ENCODE measurements at regions of chr2 and their contacts with region 1.

Region 1: DNA sequence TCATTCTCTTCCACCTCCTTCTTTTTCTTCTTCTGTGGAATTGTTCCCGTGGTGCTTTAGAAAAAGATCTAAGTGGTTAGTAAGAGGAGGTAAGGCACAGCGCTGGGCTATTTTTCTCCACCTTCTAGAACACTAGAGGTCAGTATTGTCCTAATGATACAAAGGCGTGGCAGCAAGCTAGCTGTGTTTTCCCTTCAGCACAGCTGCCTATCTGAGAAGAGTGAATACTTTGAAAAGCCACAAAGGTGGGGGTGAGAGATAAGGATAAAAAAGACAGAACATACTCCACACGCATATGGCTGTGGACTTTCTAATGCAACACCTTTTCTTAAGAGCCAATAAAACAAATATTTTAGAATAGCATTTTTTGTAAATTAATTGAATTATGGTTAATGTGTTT is 2.1 kb downstream of the CNTNAP5 start:
- DNase-seq: peak; percentile 41 to 59
- H3K4me3 ChIP-seq: no peak overlapping the region
- H3K4me3 Mint-ChIP-seq: no peak overlapping the region
- H3K27ac Mint-ChIP-seq: no peak overlapping the region
- H3K4me1 ChIP-seq: no peaks in the 10 kb centered on the region
- H3K4me1 Mint-ChIP-seq: no peaks in the 10 kb centered on the region
- H3K27me3 ChIP-seq: no peaks in the 10 kb centered on the region
- H3K27me3 Mint-ChIP-seq: peaks cover 3% of the 10 kb centered on the region
- CTCF ChIP-seq: peak; percentile 58 to 67

Region 2: DNA sequence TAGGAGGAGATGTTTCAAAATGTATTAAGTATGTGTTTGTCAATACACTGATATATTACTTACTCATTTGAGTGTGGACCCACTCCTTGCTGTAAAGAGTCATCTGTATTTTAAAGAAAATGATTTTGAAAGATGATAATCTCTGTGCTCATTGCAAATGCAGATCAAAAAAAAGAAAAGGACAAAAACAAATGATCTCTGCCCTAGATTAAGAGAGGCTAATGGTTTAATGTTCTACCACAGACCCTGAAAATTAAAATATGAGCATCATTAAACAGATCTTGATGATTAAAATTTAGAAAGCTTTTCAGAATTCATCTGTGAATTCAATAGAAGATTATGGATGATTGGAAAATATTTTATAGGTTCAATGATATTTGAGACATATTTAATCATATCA is 134.4 kb after region 1 on chr2:
- CTCF ChIA-PET with region 1: interaction called, 4 read pairs
- POLR2A ChIA-PET with region 1: no interaction called
- intact Hi-C with region 1: loop called (anchors 1 kb)
- DNase-seq: no peak
- H3K4me3 ChIP-seq: no peak overlapping the region
- H3K4me3 Mint-ChIP-seq: no peak overlapping the region
- H3K27ac Mint-ChIP-seq: no peak overlapping the region
- H3K4me1 ChIP-seq: no peaks in the 10 kb centered on the region
- H3K4me1 Mint-ChIP-seq: no peaks in the 10 kb centered on the region
- H3K27me3 ChIP-seq: no peaks in the 10 kb centered on the region
- H3K27me3 Mint-ChIP-seq: peaks cover 6% of the 10 kb centered on the region
- CTCF ChIP-seq: no peak

Region 3: DNA sequence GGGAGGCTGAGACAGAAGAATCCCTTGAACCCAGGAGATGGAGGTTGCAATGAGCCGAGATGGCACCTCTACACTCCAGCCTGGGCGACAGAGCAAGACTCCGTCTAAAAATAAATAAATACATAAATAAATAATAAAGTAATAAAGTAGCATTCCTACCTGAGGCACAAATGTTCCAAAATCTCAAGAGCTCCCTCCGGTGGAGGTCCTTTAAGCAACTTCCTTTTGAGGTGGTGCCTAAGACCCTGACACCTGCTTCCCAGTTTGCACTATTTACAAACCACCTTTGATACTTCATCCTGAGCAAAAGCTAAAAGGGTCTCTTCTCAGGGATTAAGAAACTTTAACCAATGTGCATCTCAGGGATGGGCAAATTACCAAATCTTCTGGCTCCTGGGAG is 503.0 kb after region 1 on chr2:
- CTCF ChIA-PET with region 1: no interaction called
- POLR2A ChIA-PET with region 1: no interaction called
- intact Hi-C with region 1: loop called (anchors 10 kb)
- DNase-seq: no peak
- H3K4me3 ChIP-seq: no peak overlapping the region
- H3K4me3 Mint-ChIP-seq: no peak overlapping the region
- H3K27ac Mint-ChIP-seq: no peak overlapping the region
- H3K4me1 ChIP-seq: no peaks in the 10 kb centered on the region
- H3K4me1 Mint-ChIP-seq: no peaks in the 10 kb centered on the region
- H3K27me3 ChIP-seq: no peaks in the 10 kb centered on the region; the same call in none of the 2 replicates
- H3K27me3 Mint-ChIP-seq: peaks cover 9% of the 10 kb centered on the region
- CTCF ChIP-seq: no peak

Region 4: DNA sequence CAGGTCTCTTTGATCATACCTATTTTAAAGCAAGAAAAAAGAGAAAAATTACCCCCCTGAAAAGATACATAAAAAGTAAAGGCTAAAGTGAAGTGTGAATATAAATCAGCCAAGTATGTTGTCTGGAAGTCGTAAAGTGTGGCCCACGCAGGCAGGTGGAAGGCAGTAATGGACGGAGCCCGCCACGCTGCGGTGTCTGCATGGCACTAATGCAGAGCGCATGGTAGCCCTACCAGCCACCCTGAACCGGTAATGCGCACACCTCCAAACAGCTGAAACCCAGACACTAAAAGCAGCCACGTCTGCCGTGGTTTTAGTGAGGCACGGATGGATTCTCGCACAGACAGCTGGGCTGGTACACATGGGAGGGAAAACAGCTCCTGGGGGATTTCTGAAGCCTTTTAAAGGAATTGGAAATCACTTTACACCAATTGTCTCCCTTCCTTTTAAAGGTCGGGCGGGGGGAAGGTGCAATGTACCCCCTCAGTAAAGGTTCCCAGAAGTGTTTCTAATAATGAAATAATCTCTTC is 613.1 kb after region 1 on chr2:
- CTCF ChIA-PET with region 1: no interaction called
- POLR2A ChIA-PET with region 1: no interaction called
- intact Hi-C with region 1: no loop called
- DNase-seq: no peak
- H3K4me3 ChIP-seq: no peak overlapping the region
- H3K4me3 Mint-ChIP-seq: no peak overlapping the region
- H3K27ac Mint-ChIP-seq: no peak overlapping the region
- H3K4me1 ChIP-seq: no peaks in the 10 kb centered on the region
- H3K4me1 Mint-ChIP-seq: no peaks in the 10 kb centered on the region
- H3K27me3 ChIP-seq: no peaks in the 10 kb centered on the region
- H3K27me3 Mint-ChIP-seq: no peaks in the 10 kb centered on the region
- CTCF ChIP-seq: no peak

Region 5: DNA sequence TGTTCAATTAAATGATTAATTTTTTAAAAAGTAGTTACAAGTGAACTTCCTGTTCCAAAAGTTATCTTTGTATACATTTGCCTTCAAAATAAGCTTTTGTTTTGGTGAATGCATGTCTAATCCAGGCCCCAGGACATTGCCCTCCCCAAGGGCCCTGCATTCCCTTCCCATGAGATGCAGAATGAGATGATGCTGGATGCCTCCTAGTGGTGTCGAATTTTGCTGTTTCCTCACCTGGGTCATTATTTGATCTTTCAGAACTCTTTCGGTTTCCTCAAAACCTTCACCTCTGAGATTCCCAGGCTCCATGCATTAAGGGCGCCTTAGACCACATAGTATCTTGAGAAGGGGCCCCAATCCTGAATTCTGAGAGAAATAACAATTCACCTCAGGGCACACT is 726.7 kb after region 1 on chr2:
- CTCF ChIA-PET with region 1: no interaction called
- POLR2A ChIA-PET with region 1: no interaction called
- intact Hi-C with region 1: loop called (anchors 1 kb)
- DNase-seq: no peak
- H3K4me3 ChIP-seq: no peak overlapping the region
- H3K4me3 Mint-ChIP-seq: no peak overlapping the region
- H3K27ac Mint-ChIP-seq: no peak overlapping the region
- H3K4me1 ChIP-seq: no peaks in the 10 kb centered on the region
- H3K4me1 Mint-ChIP-seq: no peaks in the 10 kb centered on the region
- H3K27me3 ChIP-seq: no peaks in the 10 kb centered on the region
- H3K27me3 Mint-ChIP-seq: peaks cover 18% of the 10 kb centered on the region
- CTCF ChIP-seq: peak in 1 of 2 experiments; percentile 9

Region 6: GRCh38 chr2:124804014-124804940 is 777.1 kb after region 1 on chr2:
- CTCF ChIA-PET with region 1: interaction called, 5 read pairs
- POLR2A ChIA-PET with region 1: no interaction called
- intact Hi-C with region 1: loop called (anchors 1 kb)
- DNase-seq: peak; percentile 32 to 45
- H3K4me3 ChIP-seq: no peak overlapping the region
- H3K4me3 Mint-ChIP-seq: no peak overlapping the region
- H3K27ac Mint-ChIP-seq: no peak overlapping the region
- H3K4me1 ChIP-seq: no peaks in the 10 kb centered on the region
- H3K4me1 Mint-ChIP-seq: peaks cover 16% of the 10 kb centered on the region
- H3K27me3 ChIP-seq: no peaks in the 10 kb centered on the region
- H3K27me3 Mint-ChIP-seq: no peaks in the 10 kb centered on the region
- CTCF ChIP-seq: peak; percentile 55 to 71

Region 7: DNA sequence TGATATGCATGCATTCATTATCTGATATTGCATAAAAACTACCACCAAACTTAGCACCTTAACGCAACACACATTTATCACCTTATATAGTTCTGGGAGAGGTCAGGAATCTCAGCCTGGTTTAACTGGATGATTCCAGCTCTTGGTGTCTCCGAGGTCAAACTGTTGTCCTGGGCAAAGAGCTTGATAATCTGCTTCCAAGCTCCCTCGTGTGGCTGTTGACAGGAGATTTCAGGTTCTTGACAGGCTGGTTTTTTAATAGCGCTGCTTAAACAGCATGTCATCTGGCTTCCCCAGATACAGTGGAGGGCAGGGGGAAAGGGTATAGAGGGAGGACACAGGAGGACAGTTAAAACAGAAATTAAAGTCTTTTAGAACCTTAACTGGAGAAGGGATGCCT is 783.0 kb after region 1 on chr2:
- CTCF ChIA-PET with region 1: interaction called, 18 read pairs
- POLR2A ChIA-PET with region 1: no interaction called
- intact Hi-C with region 1: loop called (anchors 1 kb)
- DNase-seq: peak; percentile 55 to 67
- H3K4me3 ChIP-seq: no peak overlapping the region
- H3K4me3 Mint-ChIP-seq: no peak overlapping the region
- H3K27ac Mint-ChIP-seq: no peak overlapping the region
- H3K4me1 ChIP-seq: peaks cover 6% of the 10 kb centered on the region; the same call in 1 of the 2 replicates
- H3K4me1 Mint-ChIP-seq: peaks cover 13% of the 10 kb centered on the region
- H3K27me3 ChIP-seq: no peaks in the 10 kb centered on the region
- H3K27me3 Mint-ChIP-seq: peaks cover 3% of the 10 kb centered on the region
- CTCF ChIP-seq: peak; percentile 33 to 63